ENCODE measurements at regions of chr11 and their contacts with region 1.

Region 1: DNA sequence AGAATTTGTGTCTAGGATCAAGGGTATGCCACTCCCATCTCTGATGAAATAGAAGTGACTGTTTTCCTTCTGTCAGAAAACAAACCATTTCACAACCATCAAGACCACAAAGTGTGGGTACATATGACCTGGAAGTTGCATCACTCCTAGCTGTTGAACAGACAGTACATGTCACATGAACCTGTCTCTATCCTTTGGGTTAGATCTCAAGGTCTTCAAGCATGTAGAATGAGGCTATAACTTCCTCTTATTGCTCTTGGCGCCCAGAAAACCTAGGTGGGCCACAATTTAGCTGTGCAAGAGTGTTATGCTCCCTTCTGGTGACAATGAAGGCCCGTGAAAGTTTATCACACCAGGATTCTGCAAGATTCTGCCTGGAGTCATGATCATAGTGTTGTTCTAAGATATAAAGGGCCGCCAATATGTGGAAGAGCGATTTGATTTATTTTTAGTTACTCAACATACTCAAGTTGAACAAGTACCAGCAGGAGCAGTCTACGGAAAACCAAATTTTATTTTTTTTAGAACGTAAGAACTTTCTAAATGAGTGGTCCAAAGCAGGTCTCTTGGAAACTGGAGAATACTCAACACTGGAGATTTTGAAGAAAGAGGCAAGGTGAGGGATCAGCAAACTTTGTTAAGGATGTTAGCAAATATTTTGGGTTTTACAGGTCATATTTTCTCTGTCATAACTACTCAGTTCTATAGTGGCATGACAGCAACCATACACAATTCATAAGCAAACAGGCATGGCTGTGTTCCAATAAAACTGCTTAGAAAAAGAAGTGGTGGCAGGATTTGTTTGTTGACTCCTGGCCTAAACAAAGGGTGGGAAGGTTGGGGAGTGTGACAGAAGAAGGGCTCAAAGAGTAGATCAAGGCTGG is 101.8 kb downstream of the USP35 start:
- DNase-seq: peak; percentile 43
- ATAC-seq: peak; percentile 54
- H3K4me3 Mint-ChIP-seq: no peak overlapping the region
- H3K27ac Mint-ChIP-seq: peak overlapping the region; percentile 85
- H3K4me1 Mint-ChIP-seq: peaks cover 33% of the 10 kb centered on the region
- H3K27me3 Mint-ChIP-seq: no peaks in the 10 kb centered on the region

Region 2: DNA sequence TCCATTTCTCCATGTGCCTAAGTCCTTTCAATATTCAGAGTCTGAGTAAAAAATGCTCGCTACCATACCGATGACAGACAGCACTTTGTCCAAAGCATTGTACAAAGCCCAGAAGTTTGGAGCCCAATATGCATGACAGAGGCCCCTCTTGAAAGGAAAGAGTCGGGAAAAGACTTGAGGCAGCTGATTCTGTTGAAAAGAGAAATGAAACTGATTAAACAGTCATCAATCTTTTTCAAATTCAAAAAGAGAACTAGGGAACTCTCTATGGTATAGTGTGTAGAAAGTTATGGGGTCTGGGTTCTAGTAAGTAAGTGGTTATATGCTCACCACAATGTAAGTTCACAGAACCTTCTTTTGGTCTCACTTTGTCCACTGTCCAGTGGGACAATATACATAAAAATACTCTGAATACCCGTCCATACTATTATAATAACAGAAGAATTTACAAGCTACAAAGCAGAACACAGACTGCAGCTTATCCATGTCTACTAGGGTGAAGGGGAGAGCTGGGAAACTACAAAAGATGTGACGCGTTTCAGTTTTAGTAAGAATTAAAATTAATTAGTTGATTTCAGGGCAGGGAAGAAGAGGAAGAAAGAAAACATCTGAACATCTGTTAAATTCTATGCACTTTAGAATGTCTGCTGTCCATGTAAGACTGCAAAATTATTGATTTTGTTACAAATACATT is 177.8 kb before region 1 on chr11:
- CTCF ChIA-PET with region 1: no interaction called
- POLR2A ChIA-PET with region 1: no interaction called
- intact Hi-C with region 1: no loop called
- DNase-seq: no peak
- ATAC-seq: no peak
- H3K4me3 Mint-ChIP-seq: no peak overlapping the region
- H3K27ac Mint-ChIP-seq: no peak overlapping the region
- H3K4me1 Mint-ChIP-seq: no peaks in the 10 kb centered on the region
- H3K27me3 Mint-ChIP-seq: no peaks in the 10 kb centered on the region

Region 3: GRCh38 chr11:78228467-78228866 is 62.1 kb before region 1 on chr11:
- CTCF ChIA-PET with region 1: interaction called, 3 read pairs
- POLR2A ChIA-PET with region 1: no interaction called
- intact Hi-C with region 1: loop called in 1 of 2 experiments (anchors 2 kb)
- DNase-seq: no peak
- ATAC-seq: no peak
- H3K4me3 Mint-ChIP-seq: no peak overlapping the region
- H3K27ac Mint-ChIP-seq: no peak overlapping the region
- H3K4me1 Mint-ChIP-seq: peaks cover 26% of the 10 kb centered on the region
- H3K27me3 Mint-ChIP-seq: no peaks in the 10 kb centered on the region

Region 4: DNA sequence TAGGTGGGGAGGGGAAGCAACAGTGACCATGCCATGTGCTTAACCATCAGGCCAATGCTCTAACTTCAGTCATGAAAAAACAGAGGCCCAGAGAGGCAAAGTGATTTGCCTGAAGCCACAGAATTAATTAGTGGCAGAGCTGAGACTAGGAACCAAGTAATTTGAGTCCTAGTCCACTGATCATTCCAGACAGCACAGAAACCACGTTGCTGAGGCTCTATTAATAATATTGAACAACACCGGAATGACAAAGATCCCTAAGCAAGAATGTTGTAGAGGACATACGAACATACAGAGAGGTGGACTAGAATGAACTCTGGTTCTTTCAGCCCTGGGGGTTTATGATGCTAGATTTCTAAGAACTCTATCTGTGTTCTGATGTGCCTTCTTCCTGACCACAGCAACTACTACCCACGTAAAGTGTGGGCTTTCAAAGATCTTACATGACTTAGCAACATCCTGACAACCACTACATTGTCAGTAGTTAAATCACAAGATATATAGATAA is 34.8 kb after region 1 on chr11:
- CTCF ChIA-PET with region 1: no interaction called
- POLR2A ChIA-PET with region 1: no interaction called
- intact Hi-C with region 1: loop called (anchors 1 kb)
- DNase-seq: peak; percentile 21
- ATAC-seq: peak; percentile 88
- H3K4me3 Mint-ChIP-seq: no peak overlapping the region
- H3K27ac Mint-ChIP-seq: peak overlapping the region; percentile 63
- H3K4me1 Mint-ChIP-seq: peaks cover 30% of the 10 kb centered on the region
- H3K27me3 Mint-ChIP-seq: no peaks in the 10 kb centered on the region

Region 5: DNA sequence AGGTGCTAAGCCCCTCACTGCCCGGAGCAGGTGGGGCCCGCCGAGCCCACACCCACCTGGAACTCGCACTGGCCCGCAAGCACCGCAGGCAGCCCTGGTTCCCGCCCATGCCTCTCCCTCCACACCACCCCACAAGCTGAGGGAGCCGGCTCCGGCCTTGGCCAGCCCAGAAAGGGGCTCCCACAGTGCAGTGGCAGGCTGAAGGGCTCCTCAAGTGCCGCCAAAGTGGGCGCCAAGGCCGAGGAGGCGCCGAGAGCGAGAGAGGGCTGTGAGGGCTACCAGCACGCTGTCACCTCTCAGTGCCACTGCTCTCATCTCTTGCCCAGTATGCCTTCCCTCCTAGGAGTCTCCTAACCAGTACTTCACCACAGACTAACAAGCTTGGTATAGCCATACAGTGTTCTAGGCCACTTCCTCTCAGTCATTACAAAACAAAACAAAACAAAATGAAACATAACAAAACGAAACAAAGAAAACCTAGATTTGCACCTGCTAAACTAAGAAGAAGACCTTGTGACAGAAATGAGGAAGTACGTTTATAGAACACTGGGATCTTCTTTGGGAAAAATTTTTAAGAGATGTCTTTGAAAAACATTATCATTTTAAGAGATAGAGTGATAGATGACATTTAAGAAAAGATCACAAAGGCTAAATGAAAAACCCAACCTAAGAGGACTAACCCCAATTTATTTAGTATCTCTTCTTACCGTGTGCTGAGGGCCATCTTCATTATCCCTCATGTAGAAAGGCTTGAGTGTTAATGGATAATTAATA is 174.8 kb after region 1 on chr11:
- CTCF ChIA-PET with region 1: no interaction called
- POLR2A ChIA-PET with region 1: no interaction called
- intact Hi-C with region 1: no loop called
- DNase-seq: peak; percentile 44
- ATAC-seq: peak; percentile 100
- H3K4me3 Mint-ChIP-seq: peak overlapping the region; percentile 41
- H3K27ac Mint-ChIP-seq: peak overlapping the region; percentile 72
- H3K4me1 Mint-ChIP-seq: peaks cover 16% of the 10 kb centered on the region
- H3K27me3 Mint-ChIP-seq: no peaks in the 10 kb centered on the region

Measured in activated CD4-positive, alpha-beta T cell treated with anti-CD3 and anti-CD28 coated beads for 36 hours (primary cell).